ENCODE measurements at regions of chr15 and their contacts with region 1.

Region 1: GRCh38 chr15:34367101-34368081 is at the start of gene LPCAT4:
- DNase-seq: peak; percentile 87
- ATAC-seq: peak; percentile 86
- H3K4me3 Mint-ChIP-seq: peak within 1 kb of the TSS; percentile 94
- H3K27ac Mint-ChIP-seq: peak within 1 kb of the TSS; percentile 95
- H3K4me1 Mint-ChIP-seq: peaks cover 45% of the 10 kb centered on the region
- H3K27me3 Mint-ChIP-seq: no peaks in the 10 kb centered on the region
- CTCF ChIP-seq: peak; percentile 78
- total RNA-seq, gene LPCAT4: 23.8 and 28.8 TPM in 2 replicates

Region 2: GRCh38 chr15:34101366-34102175 is 265.8 kb before region 1 on chr15 and contains the starts of genes EMC7 and PGBD4:
- CTCF ChIA-PET with region 1: interaction called, 5 read pairs
- POLR2A ChIA-PET with region 1: interaction called, 7 read pairs
- intact Hi-C with region 1: loop called (anchors 1 kb)
- DNase-seq: peak; percentile 98
- ATAC-seq: peak; percentile 98
- H3K4me3 Mint-ChIP-seq: peak within 1 kb of the TSS; percentile 99
- H3K27ac Mint-ChIP-seq: peak within 1 kb of the TSS; percentile 98
- H3K4me1 Mint-ChIP-seq: peaks cover 43% of the 10 kb centered on the region
- H3K27me3 Mint-ChIP-seq: no peaks in the 10 kb centered on the region
- CTCF ChIP-seq: no peak
- total RNA-seq, gene EMC7: 29.8 and 31.9 TPM in 2 replicates
- total RNA-seq, gene PGBD4: 4.8 and 5.3 TPM in 2 replicates

Region 3: DNA sequence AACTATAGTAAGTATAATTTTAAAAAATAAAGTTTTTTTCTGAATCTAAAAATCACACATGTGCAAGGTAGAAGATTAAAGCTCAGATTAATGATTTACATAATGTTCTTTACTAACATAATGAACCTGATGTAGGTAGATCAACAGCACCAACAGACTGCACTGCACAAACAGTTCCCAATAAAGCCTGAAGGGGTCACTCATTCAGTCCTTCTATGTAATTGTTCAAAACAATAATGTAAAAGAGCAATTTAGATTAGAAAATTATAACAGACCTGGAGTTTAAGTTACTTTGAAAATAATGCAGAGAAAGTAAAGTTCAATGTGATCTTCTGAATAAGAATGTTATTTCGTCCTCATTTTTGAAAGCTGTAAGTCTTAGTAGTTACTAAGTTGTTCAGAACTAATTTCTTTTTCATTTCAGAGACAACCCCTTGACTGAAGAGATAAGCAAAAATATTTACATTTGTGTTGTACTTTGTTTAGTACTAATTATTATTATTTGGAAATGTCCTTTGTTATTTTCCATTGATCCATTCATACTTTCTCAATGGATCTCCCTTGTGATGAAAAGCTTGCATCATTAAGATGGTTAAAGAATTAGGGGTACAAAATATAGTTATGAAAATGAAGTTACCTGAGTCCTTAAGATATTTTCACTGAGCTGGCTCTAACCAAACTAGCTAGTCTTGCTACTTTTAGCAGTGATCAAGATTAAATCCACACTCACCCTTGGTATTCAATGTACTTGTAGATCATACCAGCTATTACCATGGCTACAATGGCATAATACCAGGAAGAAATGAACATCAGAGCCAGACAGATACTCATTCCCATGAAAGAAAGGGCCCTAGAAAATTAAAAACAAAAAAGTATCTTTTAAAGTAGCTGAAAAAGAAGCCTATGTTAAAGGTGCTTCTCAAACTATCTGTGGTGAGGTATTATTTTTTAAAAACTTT is 125.7 kb before region 1 on chr15:
- CTCF ChIA-PET with region 1: interaction called, 78 read pairs
- POLR2A ChIA-PET with region 1: interaction called, 11 read pairs
- intact Hi-C with region 1: loop called (anchors 1 kb)
- DNase-seq: no peak
- ATAC-seq: peak; percentile 94
- H3K4me3 Mint-ChIP-seq: no peak overlapping the region
- H3K27ac Mint-ChIP-seq: no peak overlapping the region
- H3K4me1 Mint-ChIP-seq: peaks cover 4% of the 10 kb centered on the region
- H3K27me3 Mint-ChIP-seq: no peaks in the 10 kb centered on the region
- CTCF ChIP-seq: peak; percentile 53

Region 4: DNA sequence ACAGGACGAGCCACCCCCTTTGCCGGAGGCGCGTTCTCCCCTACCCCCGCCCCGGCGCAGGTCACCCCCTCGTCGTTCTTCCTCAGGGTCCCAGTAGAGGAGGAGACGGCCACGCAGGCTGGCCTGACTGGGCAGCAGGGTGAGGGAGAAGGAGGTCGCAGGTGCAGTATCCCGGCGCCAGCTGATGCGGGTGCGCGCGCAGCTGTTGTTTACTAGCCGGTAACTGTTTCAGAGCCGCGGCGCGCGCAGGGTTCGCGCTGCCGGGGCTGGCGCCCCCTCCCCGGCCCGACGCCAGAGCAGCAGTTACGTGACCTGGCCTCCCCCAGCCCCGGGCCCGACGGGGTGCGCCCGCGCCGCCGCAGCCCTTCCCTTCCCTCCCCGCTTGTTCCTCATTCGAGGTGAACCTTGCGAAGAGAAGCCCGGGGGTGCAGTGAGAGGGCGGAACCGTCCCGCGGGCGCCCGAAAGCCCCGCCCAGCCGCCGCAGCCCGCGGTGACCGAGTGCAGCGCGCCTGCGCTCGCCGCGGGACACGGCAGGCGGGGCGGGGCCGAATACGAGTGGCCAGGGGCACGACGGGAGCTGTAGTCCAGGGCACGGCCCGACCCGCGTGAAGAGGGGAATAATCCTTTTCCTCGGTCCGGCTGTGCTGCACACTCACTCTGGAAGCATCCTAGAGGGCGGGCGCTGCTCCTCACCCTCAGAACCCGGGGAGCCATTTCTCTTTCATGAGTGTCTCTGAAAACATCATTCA is 29.7 kb before region 1 on chr15 and contains the start of gene SLC12A6:
- CTCF ChIA-PET with region 1: interaction called, 32 read pairs
- POLR2A ChIA-PET with region 1: interaction called, 64 read pairs
- intact Hi-C with region 1: loop called (anchors 5 kb)
- DNase-seq: peak; percentile 93
- ATAC-seq: peak; percentile 82
- H3K4me3 Mint-ChIP-seq: peak within 1 kb of the TSS; percentile 99
- H3K27ac Mint-ChIP-seq: peak within 1 kb of the TSS; percentile 99
- H3K4me1 Mint-ChIP-seq: peaks cover 66% of the 10 kb centered on the region
- H3K27me3 Mint-ChIP-seq: no peaks in the 10 kb centered on the region
- CTCF ChIP-seq: no peak
- total RNA-seq, gene SLC12A6: 61.3 and 74.4 TPM in 2 replicates

Region 5: DNA sequence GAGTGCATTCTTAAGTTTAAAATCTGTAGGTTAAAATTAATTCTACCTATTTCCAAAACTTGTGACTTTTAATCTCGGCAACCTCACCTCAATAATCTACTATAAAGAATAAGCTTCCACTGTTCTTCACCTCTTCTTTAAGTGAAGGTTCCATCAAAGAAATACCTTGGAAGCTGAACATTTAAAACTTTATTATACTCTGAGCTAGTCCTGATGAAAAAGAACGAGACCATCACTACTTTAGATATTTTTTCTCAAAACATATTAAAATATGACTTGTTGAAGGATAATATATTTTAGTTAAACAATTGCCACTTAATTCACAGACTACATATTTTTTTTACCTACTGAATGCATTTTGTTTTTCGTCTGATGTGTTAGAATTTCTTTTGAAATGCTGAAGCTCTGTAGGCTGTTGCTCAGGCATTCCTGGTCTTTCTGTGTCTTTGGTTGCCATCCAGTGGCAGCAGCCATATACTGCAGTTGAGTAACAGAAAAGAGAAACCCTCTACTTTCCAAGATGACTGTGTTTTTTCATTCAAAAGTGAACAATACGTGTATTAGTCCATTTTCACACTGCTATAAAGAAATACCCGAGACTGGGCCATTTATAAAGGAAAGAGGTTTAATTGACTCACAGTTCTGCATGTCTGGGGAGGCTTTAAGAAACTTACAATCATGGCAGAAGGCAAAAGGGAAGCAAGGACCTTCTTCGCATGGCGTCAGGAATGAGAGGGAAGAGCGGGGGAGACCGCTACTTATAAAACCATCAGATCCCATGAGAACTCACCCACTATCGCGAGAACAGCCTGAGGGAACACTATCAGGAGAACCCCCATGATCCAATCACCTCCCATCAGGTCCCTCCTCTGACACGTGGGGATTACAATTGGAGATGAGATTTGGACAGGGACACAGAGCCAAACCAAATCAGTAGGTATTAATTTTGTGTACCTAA is 220.6 kb after region 1 on chr15:
- CTCF ChIA-PET with region 1: interaction called, 5 read pairs
- POLR2A ChIA-PET with region 1: interaction called, 3 read pairs
- intact Hi-C with region 1: loop called (anchors 1 kb)
- DNase-seq: no peak
- ATAC-seq: peak; percentile 53
- H3K4me3 Mint-ChIP-seq: peak overlapping the region; percentile 67
- H3K27ac Mint-ChIP-seq: peak overlapping the region; percentile 68
- H3K4me1 Mint-ChIP-seq: peaks cover 11% of the 10 kb centered on the region
- H3K27me3 Mint-ChIP-seq: peaks cover 2% of the 10 kb centered on the region
- CTCF ChIP-seq: peak; percentile 41

Measured in activated B cell treated with CpG ODN at 0.5 μM for 24 hours (primary cell).